ENCODE measurements at regions of chr11 and their contacts with region 1.

Region 1: GRCh38 chr11:118530408-118531339 is at the start of gene TMEM25:
- DNase-seq: peak; percentile 32
- ATAC-seq: peak; percentile 86
- H3K4me3 ChIP-seq: peak within 1 kb of the TSS; percentile 92
- H3K27ac ChIP-seq: peak within 1 kb of the TSS; percentile 32; the same call in 1 of the 2 replicates
- H3K4me1 ChIP-seq: peaks cover 2% of the 10 kb centered on the region; the same call in 1 of the 2 replicates
- H3K27me3 ChIP-seq: no peaks in the 10 kb centered on the region
- CTCF ChIP-seq: no peak
- POLR2A ChIP-seq: no peak
- RAD21 ChIP-seq: no peak
- total RNA-seq, gene TMEM25: 14.0 and 14.2 TPM in 2 replicates

Region 2: DNA sequence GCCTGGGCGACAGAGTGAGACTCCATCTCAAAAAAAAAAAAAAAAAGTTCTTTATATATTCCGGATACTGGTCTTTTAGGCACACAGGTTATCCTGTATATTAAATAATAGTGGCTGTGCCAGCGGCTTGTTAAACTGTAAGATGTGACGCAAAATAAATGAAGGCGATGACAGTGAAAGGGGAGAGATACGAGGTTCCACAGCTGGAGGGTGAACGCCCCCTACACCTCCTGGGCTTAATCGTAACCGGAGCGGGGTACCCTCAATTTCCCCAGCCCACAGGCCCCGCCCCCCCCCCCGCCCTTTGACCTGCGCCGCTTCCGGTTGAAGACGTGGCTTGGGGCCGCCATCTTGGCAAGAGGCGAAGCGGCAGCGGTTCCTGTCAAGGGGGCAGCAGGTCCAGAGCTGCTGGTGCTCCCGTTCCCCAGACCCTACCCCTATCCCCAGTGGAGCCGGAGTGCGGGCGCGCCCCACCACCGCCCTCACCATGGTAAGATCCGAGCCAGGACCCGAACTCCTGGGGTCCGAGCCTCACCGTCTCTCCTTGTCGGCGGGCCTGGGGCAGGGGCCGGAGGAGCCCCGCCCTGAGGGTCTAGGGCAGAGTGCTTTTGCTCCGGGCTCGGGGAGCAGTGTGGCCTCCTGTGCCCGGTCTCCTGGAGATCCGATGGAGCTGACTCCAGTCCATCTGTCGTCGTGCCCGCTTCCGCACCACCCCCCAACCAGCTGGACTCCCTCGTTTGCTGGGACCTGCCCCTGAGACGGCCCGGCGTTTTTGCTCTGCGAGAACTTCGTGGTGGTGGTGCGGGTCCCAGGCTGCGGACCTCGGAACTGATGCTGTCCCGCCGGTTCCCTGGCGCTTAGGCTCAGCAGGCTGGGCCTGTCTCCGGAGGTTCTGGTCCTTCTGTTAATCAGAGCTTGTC is 41.6 kb after region 1 on chr11 and contains the start of gene ARCN1:
- CTCF ChIA-PET with region 1: no interaction called
- POLR2A ChIA-PET with region 1: interaction called, 3 read pairs
- dilution Hi-C with region 1: no loop called
- in situ Hi-C with region 1: no loop called
- intact Hi-C with region 1: loop called (anchors 2 kb)
- DNase-seq: peak; percentile 73
- ATAC-seq: peak; percentile 77
- H3K4me3 ChIP-seq: peak within 1 kb of the TSS; percentile 99
- H3K27ac ChIP-seq: peak within 1 kb of the TSS; percentile 100
- H3K4me1 ChIP-seq: peaks cover 7% of the 10 kb centered on the region
- H3K27me3 ChIP-seq: no peaks in the 10 kb centered on the region
- CTCF ChIP-seq: no peak
- POLR2A ChIP-seq: peak; percentile 89
- RAD21 ChIP-seq: no peak
- total RNA-seq, gene ARCN1: 148 and 176 TPM in 2 replicates